MCF 10A (cell line): ENCODE measurements at regions of chr10 and their contacts with region 1.

Region 1: GRCh38 chr10:115129752-115130151 is 36.6 kb downstream of the ATRNL1 start:
- DNase-seq: peak; percentile 26
- H3K4me3 Mint-ChIP-seq: no peak overlapping the region
- H3K27ac Mint-ChIP-seq: no peak overlapping the region
- H3K4me1 Mint-ChIP-seq: no peaks in the 10 kb centered on the region
- H3K27me3 Mint-ChIP-seq: peaks cover 14% of the 10 kb centered on the region
- CTCF ChIP-seq: peak; percentile 46

Region 2: DNA sequence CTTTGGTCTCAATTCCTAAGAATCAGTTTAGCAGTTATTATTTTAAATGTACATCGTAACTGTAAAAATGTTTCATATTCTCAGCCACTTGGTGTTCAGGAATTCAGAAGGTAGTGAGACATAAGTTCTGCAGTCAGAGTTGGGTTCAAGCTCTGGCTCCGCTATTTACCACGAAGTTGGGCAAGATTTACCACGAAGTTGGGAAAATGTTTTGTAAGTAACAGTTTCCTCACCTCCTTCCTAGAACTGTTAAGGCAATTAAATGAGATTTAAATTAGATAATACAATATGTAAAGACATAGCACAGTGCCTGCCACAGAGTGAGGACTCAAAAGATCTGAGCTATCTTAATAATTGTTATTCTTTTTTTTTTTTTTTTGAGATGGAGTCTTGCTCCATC is 455.4 kb before region 1 on chr10:
- CTCF ChIA-PET with region 1: no interaction called
- POLR2A ChIA-PET with region 1: no interaction called
- intact Hi-C with region 1: no loop called
- DNase-seq: no peak
- H3K4me3 Mint-ChIP-seq: no peak overlapping the region
- H3K27ac Mint-ChIP-seq: no peak overlapping the region
- H3K4me1 Mint-ChIP-seq: peaks cover 11% of the 10 kb centered on the region
- H3K27me3 Mint-ChIP-seq: no peaks in the 10 kb centered on the region
- CTCF ChIP-seq: no peak

Region 3: DNA sequence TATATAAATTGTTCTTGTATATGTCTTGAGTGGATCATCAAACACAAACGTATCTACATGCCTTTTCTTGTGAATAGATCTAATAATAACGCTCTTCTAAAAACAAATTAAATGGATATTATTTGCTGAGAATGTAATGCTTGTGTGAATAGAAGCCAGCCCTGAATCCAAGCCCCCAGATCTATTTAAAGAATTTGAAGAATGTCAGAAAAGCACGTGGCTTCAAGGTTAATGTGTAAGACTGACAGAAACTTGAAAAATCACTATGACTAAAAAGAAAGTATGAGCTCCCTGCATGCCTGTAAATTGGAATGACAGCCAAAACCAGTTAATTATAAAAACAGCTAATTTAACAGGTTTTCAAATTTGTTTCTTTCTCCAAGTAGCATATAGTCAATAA is 79.8 kb before region 1 on chr10:
- CTCF ChIA-PET with region 1: no interaction called
- POLR2A ChIA-PET with region 1: no interaction called
- intact Hi-C with region 1: no loop called
- DNase-seq: no peak
- H3K4me3 Mint-ChIP-seq: no peak overlapping the region
- H3K27ac Mint-ChIP-seq: no peak overlapping the region
- H3K4me1 Mint-ChIP-seq: no peaks in the 10 kb centered on the region
- H3K27me3 Mint-ChIP-seq: no peaks in the 10 kb centered on the region
- CTCF ChIP-seq: no peak

Region 4: GRCh38 chr10:115073796-115074195 is 56.0 kb before region 1 on chr10:
- CTCF ChIA-PET with region 1: no interaction called
- POLR2A ChIA-PET with region 1: no interaction called
- intact Hi-C with region 1: no loop called
- DNase-seq: no peak
- H3K4me3 Mint-ChIP-seq: no peak overlapping the region
- H3K27ac Mint-ChIP-seq: no peak overlapping the region
- H3K4me1 Mint-ChIP-seq: no peaks in the 10 kb centered on the region
- H3K27me3 Mint-ChIP-seq: peaks cover 21% of the 10 kb centered on the region
- CTCF ChIP-seq: no peak

Region 5: DNA sequence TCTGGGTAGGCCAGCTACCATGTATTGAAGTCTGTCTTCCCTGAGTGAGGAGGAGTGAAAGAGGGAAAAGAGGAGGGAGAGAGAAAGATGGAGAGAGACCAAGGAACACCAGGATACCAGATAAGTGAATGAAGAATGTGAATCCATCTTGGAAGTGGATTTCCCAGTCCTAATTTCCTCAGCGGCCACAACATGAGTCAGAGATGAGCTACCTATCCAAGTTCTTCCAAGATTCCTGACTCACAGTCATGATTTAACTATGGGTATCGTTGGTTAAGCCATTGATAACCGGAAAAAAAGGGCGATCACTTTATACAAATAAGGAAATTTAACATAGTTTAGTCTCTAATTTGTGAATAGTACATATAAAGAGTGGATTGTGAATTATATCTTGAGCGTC is 525.2 kb after region 1 on chr10:
- CTCF ChIA-PET with region 1: interaction called, 10 read pairs
- POLR2A ChIA-PET with region 1: no interaction called
- intact Hi-C with region 1: no loop called
- DNase-seq: peak; percentile 20
- H3K4me3 Mint-ChIP-seq: no peak overlapping the region
- H3K27ac Mint-ChIP-seq: no peak overlapping the region
- H3K4me1 Mint-ChIP-seq: peaks cover 5% of the 10 kb centered on the region
- H3K27me3 Mint-ChIP-seq: no peaks in the 10 kb centered on the region
- CTCF ChIP-seq: no peak